ENCODE measurements at regions of chr11 and their contacts with region 1.

Region 1: DNA sequence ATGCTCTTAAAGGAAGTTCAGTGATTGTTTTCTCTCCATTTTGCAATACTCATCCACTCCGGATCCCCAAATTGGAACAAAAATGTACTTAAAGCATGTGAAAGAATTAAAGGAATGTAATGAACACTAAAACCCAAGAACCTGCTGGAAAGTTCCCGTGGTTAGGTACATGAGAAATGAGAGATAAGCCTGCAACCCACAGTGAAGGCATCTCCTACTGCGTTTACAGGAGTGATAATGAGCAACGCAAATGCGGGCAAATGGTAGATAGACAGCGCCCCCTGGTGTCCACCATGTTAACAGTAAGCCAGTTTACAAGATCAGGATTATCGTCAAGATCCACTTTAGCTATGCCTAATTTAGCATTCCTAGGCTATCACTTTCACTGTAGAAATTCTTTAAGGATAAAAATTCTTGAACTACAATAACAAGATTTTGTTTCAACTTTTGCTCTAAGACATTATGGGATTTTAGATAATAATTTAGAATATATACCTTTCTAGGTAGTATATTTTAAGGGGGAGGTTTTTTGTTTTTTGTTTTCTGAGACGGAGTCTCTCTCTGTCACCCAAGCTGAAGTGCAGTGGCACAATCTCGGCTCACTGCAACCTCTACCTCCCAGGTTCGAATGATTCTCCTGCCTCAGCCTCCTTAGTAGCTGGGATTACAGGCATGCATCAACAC is 29.9 kb downstream of the ALG9 start:
- DNase-seq: peak; percentile 91
- H3K4me3 ChIP-seq: no peak overlapping the region
- H3K27ac ChIP-seq: no peak overlapping the region
- H3K4me1 ChIP-seq: peaks cover 0 to 4% (median 1%) of the 10 kb centered on the region in 4 donors
- H3K27me3 ChIP-seq: no peaks in the 10 kb centered on the region
- CTCF ChIP-seq: peak; percentile 89 to 95 (median 92)
- EP300 ChIP-seq: no peak
- POLR2A ChIP-seq: no peak

Region 2: GRCh38 chr11:111565114-111565720 is 276.3 kb before region 1 on chr11:
- in situ Hi-C with region 1: loop called in 1 of 4 experiments (anchors 5 kb)
- intact Hi-C with region 1: loop called (anchors 10 kb)
- DNase-seq: peak; percentile 68
- H3K4me3 ChIP-seq: no peak overlapping the region
- H3K27ac ChIP-seq: no peak overlapping the region
- H3K4me1 ChIP-seq: no peaks in the 10 kb centered on the region
- H3K27me3 ChIP-seq: no peaks in the 10 kb centered on the region
- CTCF ChIP-seq: peak; percentile 79 to 93 (median 92)
- EP300 ChIP-seq: no peak
- POLR2A ChIP-seq: no peak

Region 3: DNA sequence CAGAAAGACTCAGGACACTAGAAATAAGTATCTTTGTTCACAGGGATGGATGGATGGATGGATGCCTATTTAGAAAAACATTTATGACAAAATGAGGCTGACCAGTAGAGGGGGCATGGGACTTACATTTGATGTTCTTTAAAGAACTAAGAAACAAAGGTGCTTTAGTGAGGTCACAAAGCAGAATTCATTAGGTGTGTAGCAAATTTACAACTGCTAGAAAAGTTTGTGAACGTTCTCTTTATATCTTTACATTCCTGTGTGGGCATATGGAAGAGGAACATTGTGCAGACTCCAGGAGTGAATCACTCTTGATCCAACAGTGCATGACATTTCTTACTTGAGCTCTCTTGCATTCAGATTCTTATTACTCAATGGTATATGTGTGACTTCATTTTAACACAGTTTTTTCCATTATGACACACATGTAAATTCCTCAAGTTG is 255.1 kb before region 1 on chr11:
- in situ Hi-C with region 1: loop called in 3 of 4 experiments (anchors 5 to 10 kb)
- intact Hi-C with region 1: no loop called
- DNase-seq: no peak
- H3K4me3 ChIP-seq: no peak overlapping the region
- H3K27ac ChIP-seq: no peak overlapping the region
- H3K4me1 ChIP-seq: no peaks in the 10 kb centered on the region
- H3K27me3 ChIP-seq: no peaks in the 10 kb centered on the region
- CTCF ChIP-seq: peak; percentile 45 to 63 (median 54)
- EP300 ChIP-seq: no peak
- POLR2A ChIP-seq: no peak

Region 4: GRCh38 chr11:111601979-111602864 is 239.3 kb before region 1 on chr11 and contains the start of gene SIK2:
- in situ Hi-C with region 1: loop called in 1 of 4 experiments (anchors 10 kb)
- intact Hi-C with region 1: no loop called
- DNase-seq: peak; percentile 95
- H3K4me3 ChIP-seq: peak within 1 kb of the TSS; percentile 73 to 85 (median 78)
- H3K27ac ChIP-seq: peak within 1 kb of the TSS; percentile 94 to 98 (median 97)
- H3K4me1 ChIP-seq: peaks cover 6 to 36% (median 17%) of the 10 kb centered on the region in 4 donors
- H3K27me3 ChIP-seq: no peaks in the 10 kb centered on the region
- CTCF ChIP-seq: peak; percentile 85 to 98 (median 92)
- EP300 ChIP-seq: no peak
- POLR2A ChIP-seq: peak; percentile 55
- total RNA-seq, gene SIK2: 6.6 to 19.1 (median 16.2) TPM

Region 5: GRCh38 chr11:111777094-111778046 is 64.1 kb before region 1 on chr11:
- in situ Hi-C with region 1: loop called in 2 of 4 experiments (anchors 10 kb)
- intact Hi-C with region 1: no loop called
- DNase-seq: no peak
- H3K4me3 ChIP-seq: no peak overlapping the region
- H3K27ac ChIP-seq: peak overlapping the region in 1 of 4 donors; percentile 1
- H3K4me1 ChIP-seq: peaks cover 0 to 15% (median 4%) of the 10 kb centered on the region in 4 donors
- H3K27me3 ChIP-seq: no peaks in the 10 kb centered on the region
- CTCF ChIP-seq: peak; percentile 71 to 87 (median 76)
- EP300 ChIP-seq: no peak
- POLR2A ChIP-seq: no peak

Region 6: DNA sequence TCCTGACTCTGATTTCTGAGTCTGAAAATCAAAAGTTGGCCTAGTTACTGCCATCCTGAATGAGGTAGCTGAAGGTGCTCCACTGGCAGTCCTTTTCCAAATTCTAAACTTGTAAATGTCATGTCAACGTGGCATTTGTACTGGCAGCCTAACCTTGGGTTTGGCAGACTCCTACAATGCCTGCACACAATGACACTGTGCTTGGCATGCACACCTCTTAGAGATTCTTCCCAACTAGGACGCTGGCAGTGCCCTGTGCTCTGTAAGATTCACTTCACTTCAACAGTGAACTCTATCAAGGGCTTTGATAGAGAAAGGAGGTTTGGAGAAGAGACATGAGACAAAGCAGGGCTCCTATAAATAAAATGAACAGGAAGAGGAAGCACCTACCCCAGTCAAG is 53.5 kb before region 1 on chr11:
- in situ Hi-C with region 1: loop called in 1 of 4 experiments (anchors 10 kb)
- intact Hi-C with region 1: no loop called
- DNase-seq: no peak
- H3K4me3 ChIP-seq: no peak overlapping the region
- H3K27ac ChIP-seq: no peak overlapping the region
- H3K4me1 ChIP-seq: peaks cover 0 to 5% (median 0%) of the 10 kb centered on the region in 4 donors
- H3K27me3 ChIP-seq: no peaks in the 10 kb centered on the region
- CTCF ChIP-seq: no peak
- EP300 ChIP-seq: no peak
- POLR2A ChIP-seq: no peak